ENCODE measurements at regions of chr3 and their contacts with region 1.

Region 1: DNA sequence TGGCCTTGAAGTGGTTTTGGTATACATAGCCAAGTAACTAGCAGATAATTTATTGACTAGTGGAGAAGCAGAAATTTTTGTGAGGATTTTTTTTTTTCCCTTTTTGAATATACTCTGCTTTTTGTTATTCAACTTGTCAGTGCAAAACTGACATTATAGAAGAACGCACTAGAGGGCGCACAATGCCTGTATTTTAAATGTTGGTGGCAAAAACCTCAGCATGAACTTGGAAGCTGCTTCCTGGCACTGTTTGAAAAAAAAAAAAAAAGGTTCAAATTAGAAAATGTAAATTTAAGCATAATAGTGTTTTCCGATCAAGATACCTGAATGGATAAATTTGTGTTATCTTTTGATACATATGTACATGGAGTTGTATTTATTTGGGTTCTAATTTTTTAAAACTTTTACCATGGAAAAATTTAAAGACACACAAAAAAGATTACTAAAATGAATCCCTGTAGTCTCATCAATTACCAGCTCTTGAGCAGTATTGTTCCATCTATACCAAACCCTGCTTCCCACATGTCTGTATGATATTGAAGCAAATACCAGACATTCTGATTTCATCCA is 56.0 kb downstream of the SLC25A26 start:
- DNase-seq: peak; percentile 66
- H3K4me3 ChIP-seq: no peak overlapping the region
- H3K27ac ChIP-seq: no peak overlapping the region
- H3K4me1 ChIP-seq: no peaks in the 10 kb centered on the region
- H3K27me3 ChIP-seq: no peaks in the 10 kb centered on the region
- CTCF ChIP-seq: peak; percentile 59

Region 2: GRCh38 chr3:66179793-66180192 is 97.0 kb before region 1 on chr3:
- CTCF ChIA-PET with region 1: no interaction called
- POLR2A ChIA-PET with region 1: no interaction called
- intact Hi-C with region 1: no loop called
- DNase-seq: no peak
- H3K4me3 ChIP-seq: no peak overlapping the region
- H3K27ac ChIP-seq: no peak overlapping the region
- H3K4me1 ChIP-seq: peaks cover 24% of the 10 kb centered on the region
- H3K27me3 ChIP-seq: no peaks in the 10 kb centered on the region
- CTCF ChIP-seq: no peak

Region 3: DNA sequence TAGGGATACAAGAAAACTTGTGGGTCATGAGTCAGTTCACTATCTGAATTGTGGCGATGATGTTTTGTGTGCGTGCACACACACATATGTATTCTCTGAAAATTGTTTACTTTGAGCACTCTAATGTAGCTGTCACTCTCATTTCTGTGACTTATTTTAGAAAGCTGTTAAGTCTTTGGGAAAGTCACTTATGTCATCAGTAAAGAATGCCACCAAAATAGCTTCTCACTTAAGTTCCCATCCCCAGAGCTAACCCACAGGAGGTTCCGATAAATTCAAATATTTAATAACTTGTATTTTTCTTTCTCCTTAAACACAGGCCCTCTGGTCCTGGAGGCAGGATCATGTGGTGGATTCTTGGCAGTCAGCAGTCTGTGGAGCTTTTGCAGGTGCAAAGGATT is 85.8 kb after region 1 on chr3:
- CTCF ChIA-PET with region 1: no interaction called
- POLR2A ChIA-PET with region 1: no interaction called
- intact Hi-C with region 1: loop called (anchors 10 kb)
- DNase-seq: peak; percentile 4
- H3K4me3 ChIP-seq: no peak overlapping the region
- H3K27ac ChIP-seq: no peak overlapping the region
- H3K4me1 ChIP-seq: peaks cover 23% of the 10 kb centered on the region
- H3K27me3 ChIP-seq: no peaks in the 10 kb centered on the region
- CTCF ChIP-seq: no peak

Region 4: DNA sequence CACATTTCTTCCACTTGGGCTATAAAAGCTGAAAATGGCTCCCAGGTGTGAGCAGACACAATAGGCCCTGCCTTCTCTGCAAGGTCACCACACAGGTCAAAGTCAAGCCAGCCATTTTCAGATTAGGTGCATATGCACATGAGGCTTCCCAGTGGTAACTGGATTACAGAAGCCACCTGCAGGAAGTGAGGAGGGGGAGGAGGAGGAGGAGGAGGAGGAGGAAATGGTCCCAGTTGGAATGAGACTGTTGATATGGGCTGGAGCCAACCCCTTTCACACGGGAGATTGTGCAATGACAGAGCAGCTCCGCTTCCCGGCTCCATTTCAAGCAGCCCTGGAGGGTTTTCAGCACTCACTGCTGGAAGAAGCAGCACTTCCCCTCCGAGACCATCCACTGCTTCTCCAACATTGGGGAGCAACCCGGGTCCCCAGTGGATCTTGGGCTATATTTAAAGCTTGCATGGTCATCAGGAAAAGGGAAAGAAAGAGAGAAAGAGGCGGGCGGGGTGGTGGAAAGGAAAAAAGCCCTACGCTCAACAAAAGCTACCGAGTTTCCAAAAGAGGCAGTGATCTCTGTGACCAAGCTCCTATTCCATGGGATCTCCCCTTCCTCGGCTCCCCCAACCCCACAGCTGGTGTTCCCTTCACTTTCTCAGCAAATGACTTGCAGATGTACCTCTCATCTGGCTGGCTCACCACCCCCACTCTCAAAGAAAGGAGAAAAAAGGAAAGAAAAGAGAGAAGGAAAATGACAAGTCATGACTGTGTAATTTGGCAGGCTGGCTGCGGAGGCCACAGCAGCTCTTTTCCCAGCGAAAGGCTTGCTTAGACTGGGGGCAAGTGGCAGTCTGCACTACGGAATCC is 165.7 kb after region 1 on chr3:
- CTCF ChIA-PET with region 1: no interaction called
- POLR2A ChIA-PET with region 1: no interaction called
- intact Hi-C with region 1: no loop called
- DNase-seq: peak; percentile 65
- H3K4me3 ChIP-seq: no peak overlapping the region
- H3K27ac ChIP-seq: peak overlapping the region; percentile 86
- H3K4me1 ChIP-seq: peaks cover 46% of the 10 kb centered on the region
- H3K27me3 ChIP-seq: no peaks in the 10 kb centered on the region
- CTCF ChIP-seq: no peak

Region 5: DNA sequence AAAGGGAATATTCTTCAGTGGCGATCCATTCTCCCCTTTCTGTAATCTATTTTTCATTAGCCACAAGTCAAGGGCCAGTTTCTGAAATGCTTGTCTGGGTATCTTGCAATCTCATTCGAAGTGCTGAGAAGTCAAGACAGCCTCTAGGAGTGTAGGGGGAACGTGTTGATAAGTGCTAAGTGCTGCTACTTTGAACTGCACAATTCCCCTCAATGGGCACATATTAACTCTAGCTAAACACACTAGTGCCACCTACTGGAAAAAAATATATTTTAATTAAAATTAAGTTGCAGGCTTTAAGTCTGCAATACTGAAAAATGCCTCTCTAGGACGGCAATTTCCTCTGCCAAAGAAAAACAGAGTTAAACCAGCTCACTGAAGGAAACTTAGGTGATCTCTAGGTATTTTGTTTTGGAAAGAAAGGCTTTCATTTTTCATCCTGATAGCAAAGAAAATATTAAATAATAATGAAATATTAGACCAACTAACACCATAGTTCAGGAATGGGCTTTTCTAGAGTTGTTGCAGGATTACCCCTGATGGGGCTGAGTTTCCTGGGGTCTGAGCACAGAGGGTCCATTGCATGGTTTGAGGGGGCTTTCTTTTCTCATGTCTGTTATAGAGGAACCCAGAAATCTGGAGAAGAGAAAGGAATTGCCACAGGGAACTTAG is 539.4 kb after region 1 on chr3:
- CTCF ChIA-PET with region 1: interaction called, 5 read pairs
- POLR2A ChIA-PET with region 1: no interaction called
- intact Hi-C with region 1: loop called (anchors 2 kb)
- DNase-seq: peak; percentile 84
- H3K4me3 ChIP-seq: no peak overlapping the region
- H3K27ac ChIP-seq: no peak overlapping the region
- H3K4me1 ChIP-seq: peaks cover 12% of the 10 kb centered on the region
- H3K27me3 ChIP-seq: no peaks in the 10 kb centered on the region
- CTCF ChIP-seq: peak; percentile 46; the same call in 1 of the 2 replicates

Region 6: GRCh38 chr3:66822186-66823008 is 545.6 kb after region 1 on chr3:
- CTCF ChIA-PET with region 1: interaction called, 11 read pairs
- POLR2A ChIA-PET with region 1: no interaction called
- intact Hi-C with region 1: loop called (anchors 2 kb)
- DNase-seq: peak; percentile 46
- H3K4me3 ChIP-seq: no peak overlapping the region
- H3K27ac ChIP-seq: no peak overlapping the region
- H3K4me1 ChIP-seq: no peaks in the 10 kb centered on the region
- H3K27me3 ChIP-seq: no peaks in the 10 kb centered on the region
- CTCF ChIP-seq: peak; percentile 64

Region 7: GRCh38 chr3:66836363-66837152 is 559.8 kb after region 1 on chr3:
- CTCF ChIA-PET with region 1: no interaction called
- POLR2A ChIA-PET with region 1: no interaction called
- intact Hi-C with region 1: loop called (anchors 5 kb)
- DNase-seq: peak; percentile 27
- H3K4me3 ChIP-seq: no peak overlapping the region
- H3K27ac ChIP-seq: no peak overlapping the region
- H3K4me1 ChIP-seq: no peaks in the 10 kb centered on the region
- H3K27me3 ChIP-seq: no peaks in the 10 kb centered on the region
- CTCF ChIP-seq: peak; percentile 44; the same call in 1 of the 2 replicates

Measured in A673 (cell line).